K562 (cell line): ENCODE measurements at regions of chr1 and their contacts with region 1.

Region 1: GRCh38 chr1:89085781-89086180 is 20.8 kb upstream of the GBP1 start:
- DNase-seq: peak; percentile 45 to 71 (median 52)
- ATAC-seq: peak; percentile 87
- H3K4me3 ChIP-seq: no peak overlapping the region
- H3K27ac ChIP-seq: no peak overlapping the region
- H3K4me1 ChIP-seq: peaks cover 0 to 4% of the 10 kb centered on the region in 2 experiments; a peak in 3 of 5 replicates
- H3K27me3 ChIP-seq: no peaks in the 10 kb centered on the region
- CTCF ChIP-seq: peak; percentile 65 to 85 (median 73)
- EP300 ChIP-seq: no peak
- POLR2A ChIP-seq: no peak
- RAD21 ChIP-seq: peak; percentile 83 to 91

Region 2: DNA sequence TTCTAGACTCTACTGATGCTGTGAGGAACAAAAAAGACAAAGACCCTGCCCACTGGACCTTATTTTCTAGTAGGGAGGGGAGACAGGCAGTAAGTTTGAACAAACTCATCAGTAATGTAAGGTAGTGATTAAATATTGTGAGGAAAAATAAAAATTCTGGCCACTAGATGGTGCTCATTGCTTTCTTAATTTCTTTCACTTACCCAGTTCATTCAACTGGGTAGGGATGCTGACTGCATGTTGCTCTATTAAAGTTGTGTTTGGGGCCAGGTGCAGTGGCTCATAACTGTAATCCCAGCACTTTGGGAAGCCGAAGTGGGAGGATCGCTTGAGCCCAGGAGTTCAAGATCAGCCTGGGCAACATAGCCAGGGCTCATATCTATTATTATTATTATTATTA is 87.1 kb before region 1 on chr1:
- CTCF ChIA-PET with region 1: no interaction called
- POLR2A ChIA-PET with region 1: no interaction called
- in situ Hi-C with region 1: no loop called
- intact Hi-C with region 1: loop called (anchors 5 kb)
- DNase-seq: peak; percentile 38 to 74 (median 43)
- ATAC-seq: peak; percentile 93
- H3K4me3 ChIP-seq: no peak overlapping the region
- H3K27ac ChIP-seq: no peak overlapping the region
- H3K4me1 ChIP-seq: peaks cover 1% of the 10 kb centered on the region in 2 experiments; a peak in 2 of 5 replicates
- H3K27me3 ChIP-seq: peaks cover 0 to 3% of the 10 kb centered on the region in 2 experiments; a peak in 1 of 5 replicates
- CTCF ChIP-seq: peak; percentile 33 to 72 (median 35); a peak in 4 of 6 replicates
- EP300 ChIP-seq: no peak
- POLR2A ChIP-seq: no peak
- RAD21 ChIP-seq: peak; percentile 78 to 82

Region 3: GRCh38 chr1:89276690-89277089 is 190.9 kb after region 1 on chr1:
- CTCF ChIA-PET with region 1: no interaction called
- POLR2A ChIA-PET with region 1: no interaction called
- in situ Hi-C with region 1: no loop called
- intact Hi-C with region 1: loop called (anchors 5 kb)
- DNase-seq: peak in 1 of 4 experiments; percentile 3
- ATAC-seq: 0 out of 3 replicates have a peak, but pooled peaks have one; percentile 37
- H3K4me3 ChIP-seq: no peak overlapping the region
- H3K27ac ChIP-seq: no peak overlapping the region
- H3K4me1 ChIP-seq: peaks cover 0 to 4% of the 10 kb centered on the region in 2 experiments; a peak in 1 of 5 replicates
- H3K27me3 ChIP-seq: no peaks in the 10 kb centered on the region
- CTCF ChIP-seq: peak; percentile 17 to 25 (median 18); a peak in 2 of 6 replicates
- EP300 ChIP-seq: no peak
- POLR2A ChIP-seq: no peak
- RAD21 ChIP-seq: peak; percentile 46 to 56; a peak in 3 of 4 replicates

Region 4: GRCh38 chr1:89358287-89358893 is 272.6 kb after region 1 on chr1:
- CTCF ChIA-PET with region 1: interaction called, 14 read pairs
- POLR2A ChIA-PET with region 1: no interaction called
- in situ Hi-C with region 1: no loop called
- intact Hi-C with region 1: loop called (anchors 1 kb)
- DNase-seq: peak; percentile 23 to 74 (median 44)
- ATAC-seq: peak; percentile 98
- H3K4me3 ChIP-seq: no peak overlapping the region
- H3K27ac ChIP-seq: no peak overlapping the region
- H3K4me1 ChIP-seq: no peaks in the 10 kb centered on the region
- H3K27me3 ChIP-seq: 0 out of 5 replicates have a peak, but pooled peaks cover 0 to 4% of the 10 kb centered on the region in 2 experiments
- CTCF ChIP-seq: peak; percentile 73 to 80 (median 79)
- EP300 ChIP-seq: no peak
- POLR2A ChIP-seq: no peak
- RAD21 ChIP-seq: peak; percentile 83 to 88